ENCODE measurements at regions of chr17 and their contacts with region 1.

Region 1: DNA sequence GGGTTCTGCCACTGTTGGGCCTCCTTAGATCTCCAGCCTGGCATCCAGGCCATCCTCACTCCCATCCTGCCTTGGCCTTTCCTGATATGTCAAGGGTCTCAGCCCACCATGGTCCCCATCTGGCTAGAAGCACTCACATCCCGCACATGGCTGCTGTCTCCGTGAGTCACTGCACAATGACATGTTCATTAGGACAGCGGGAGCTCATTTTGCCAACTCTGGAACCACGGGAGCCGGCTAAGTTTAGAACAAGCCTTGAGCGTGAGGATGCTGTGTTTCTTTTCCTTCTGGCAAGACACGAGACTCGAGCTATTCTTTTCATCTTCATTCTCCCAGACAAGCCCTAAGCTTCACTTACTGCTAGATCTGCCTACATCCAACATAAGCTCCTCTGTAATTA is 65.7 kb upstream of the KSR1 start:
- DNase-seq: no peak
- H3K4me3 ChIP-seq: no peak overlapping the region
- H3K27ac ChIP-seq: no peak overlapping the region
- H3K4me1 ChIP-seq: no peaks in the 10 kb centered on the region
- H3K27me3 ChIP-seq: no peaks in the 10 kb centered on the region
- CTCF ChIP-seq: no peak
- EP300 ChIP-seq: no peak
- POLR2A ChIP-seq: no peak
- RAD21 ChIP-seq: no peak

Region 2: DNA sequence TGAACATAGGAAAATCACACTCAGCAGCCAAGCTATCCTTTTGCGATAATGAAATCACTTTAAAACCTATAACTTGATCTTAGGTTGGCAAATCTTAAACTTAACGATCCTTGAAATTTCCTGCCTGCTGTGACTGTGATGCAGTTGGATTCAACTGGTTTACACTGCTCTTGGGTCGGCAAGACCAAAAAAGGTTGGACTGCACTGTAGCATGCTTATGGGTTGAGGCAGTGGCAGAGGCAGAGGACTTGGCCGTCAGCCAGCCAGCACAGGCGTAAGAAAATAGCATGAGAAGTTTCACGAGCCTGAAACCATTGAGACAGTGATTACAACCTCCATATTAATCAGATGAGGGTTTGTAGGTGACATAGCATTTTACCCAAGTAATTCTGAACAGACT is 75.2 kb before region 1 on chr17:
- CTCF ChIA-PET with region 1: no interaction called
- POLR2A ChIA-PET with region 1: no interaction called
- DNase-seq: no peak
- H3K4me3 ChIP-seq: no peak overlapping the region
- H3K27ac ChIP-seq: no peak overlapping the region
- H3K4me1 ChIP-seq: no peaks in the 10 kb centered on the region
- H3K27me3 ChIP-seq: no peaks in the 10 kb centered on the region
- CTCF ChIP-seq: no peak
- EP300 ChIP-seq: no peak
- POLR2A ChIP-seq: no peak
- RAD21 ChIP-seq: no peak

Region 3: DNA sequence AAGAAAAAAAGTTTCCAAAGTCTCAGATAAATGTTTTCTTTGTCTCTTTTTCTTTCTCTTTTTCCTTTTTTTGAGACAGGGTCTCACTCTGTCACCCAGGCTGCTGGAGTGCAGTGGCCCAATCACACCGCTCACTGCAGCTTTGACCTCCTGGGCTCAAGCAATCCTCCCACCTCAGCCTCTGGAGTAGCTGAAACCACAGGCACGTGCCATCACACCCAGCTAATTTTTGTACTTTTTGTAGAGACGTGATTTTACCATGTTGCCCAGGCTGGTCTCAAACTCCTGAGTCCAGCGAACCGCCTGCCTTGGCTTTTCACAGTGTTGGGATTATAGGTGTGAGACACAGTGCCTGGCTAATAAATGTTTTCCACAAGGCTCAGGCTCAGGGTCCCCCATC is 12.4 kb after region 1 on chr17:
- CTCF ChIA-PET with region 1: interaction called, 14 read pairs
- POLR2A ChIA-PET with region 1: no interaction called
- DNase-seq: no peak
- H3K4me3 ChIP-seq: no peak overlapping the region
- H3K27ac ChIP-seq: no peak overlapping the region
- H3K4me1 ChIP-seq: peaks cover 0 to 4% (median under 1%) of the 10 kb centered on the region in 4 experiments; a peak in 1 of 7 replicates
- H3K27me3 ChIP-seq: no peaks in the 10 kb centered on the region
- CTCF ChIP-seq: no peak
- EP300 ChIP-seq: no peak
- POLR2A ChIP-seq: no peak
- RAD21 ChIP-seq: no peak

Region 4: DNA sequence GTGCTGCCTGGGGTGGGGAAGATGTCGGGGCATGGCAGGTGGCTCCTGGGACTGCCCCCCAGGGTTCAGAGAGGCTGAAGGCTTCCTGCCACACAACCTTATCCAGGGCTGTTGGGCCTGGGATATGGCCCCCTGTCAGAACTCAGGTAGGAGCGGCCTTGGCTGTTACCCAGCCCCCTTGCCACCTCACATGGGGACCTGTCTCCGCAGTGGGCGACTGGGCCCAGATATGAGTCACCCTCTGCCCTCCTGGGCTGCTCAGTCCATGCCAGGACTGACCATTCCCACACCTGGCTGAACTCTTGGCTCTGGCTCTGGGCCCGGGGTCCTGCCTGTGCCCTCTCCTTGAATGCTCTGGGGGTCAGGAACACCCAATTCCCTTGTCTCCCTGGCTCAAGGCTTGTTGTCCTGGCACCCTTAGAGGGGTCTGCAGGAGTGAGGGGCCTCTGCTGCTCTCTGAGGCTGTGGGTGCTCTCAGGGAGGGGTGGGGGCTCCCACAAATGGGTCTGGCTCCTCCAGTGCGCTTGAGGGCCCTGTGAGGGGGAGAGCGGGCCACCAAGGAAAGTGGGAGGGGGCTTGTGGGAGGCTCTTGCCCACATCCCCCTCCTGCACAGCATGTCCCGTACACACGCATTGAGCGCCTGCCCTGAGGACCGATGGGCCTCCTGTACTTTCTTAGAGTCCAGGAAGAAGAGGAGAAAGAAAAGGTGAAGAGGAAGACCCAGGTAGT is 276.5 kb after region 1 on chr17:
- CTCF ChIA-PET with region 1: no interaction called
- POLR2A ChIA-PET with region 1: no interaction called
- DNase-seq: no peak
- H3K4me3 ChIP-seq: no peak overlapping the region
- H3K27ac ChIP-seq: no peak overlapping the region
- H3K4me1 ChIP-seq: no peaks in the 10 kb centered on the region
- H3K27me3 ChIP-seq: no peaks in the 10 kb centered on the region
- CTCF ChIP-seq: no peak
- EP300 ChIP-seq: no peak
- POLR2A ChIP-seq: no peak
- RAD21 ChIP-seq: no peak

Measured in H1 (cell line).